ENCODE measurements at regions of chr16 and their contacts with region 1.

Region 1: GRCh38 chr16:77236063-77236511 is 36.9 kb downstream of the SYCE1L start:
- DNase-seq: peak; percentile 85 to 88
- H3K4me3 ChIP-seq: no peak overlapping the region
- H3K27ac ChIP-seq: no peak overlapping the region
- H3K4me1 ChIP-seq: no peaks in the 10 kb centered on the region
- H3K27me3 ChIP-seq: no peaks in the 10 kb centered on the region
- CTCF ChIP-seq: peak; percentile 96 to 100 (median 100)
- POLR2A ChIP-seq: peak in 1 of 2 donors; percentile 23

Region 2: DNA sequence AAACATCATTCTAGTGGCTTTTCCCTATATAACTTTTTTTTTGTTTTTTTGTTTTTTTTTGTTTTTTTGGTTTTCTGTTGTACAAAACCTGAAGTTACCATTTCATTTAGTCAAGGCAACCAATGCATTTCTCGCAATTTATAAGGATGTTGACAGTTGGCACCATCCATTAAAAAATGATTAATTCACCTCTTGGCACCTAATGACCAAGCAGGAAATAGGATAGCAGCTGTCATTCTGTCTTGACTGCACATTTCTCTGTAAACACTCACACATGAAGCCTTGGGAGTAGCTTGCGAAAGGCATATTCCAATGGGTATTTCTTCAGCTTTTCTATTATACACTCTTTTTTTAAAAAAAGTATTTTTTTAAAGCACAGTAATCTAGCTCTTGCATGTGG is 40.6 kb after region 1 on chr16:
- intact Hi-C with region 1: no loop called
- DNase-seq: no peak
- H3K4me3 ChIP-seq: no peak overlapping the region
- H3K27ac ChIP-seq: no peak overlapping the region
- H3K4me1 ChIP-seq: no peaks in the 10 kb centered on the region
- H3K27me3 ChIP-seq: no peaks in the 10 kb centered on the region
- CTCF ChIP-seq: no peak
- POLR2A ChIP-seq: no peak

Region 3: GRCh38 chr16:77585379-77586251 is 349.5 kb after region 1 on chr16:
- intact Hi-C with region 1: loop called (anchors 5 kb)
- DNase-seq: peak in 1 of 2 donors; percentile 24
- H3K4me3 ChIP-seq: no peak overlapping the region
- H3K27ac ChIP-seq: peak overlapping the region in 1 of 2 donors; percentile 20
- H3K4me1 ChIP-seq: no peaks in the 10 kb centered on the region
- H3K27me3 ChIP-seq: no peaks in the 10 kb centered on the region
- CTCF ChIP-seq: no peak
- POLR2A ChIP-seq: no peak

Measured in uterus (tissue), 4 donors.